GM12878 (cell line): ENCODE measurements at regions of chr2 and their contacts with region 1.

Region 1: DNA sequence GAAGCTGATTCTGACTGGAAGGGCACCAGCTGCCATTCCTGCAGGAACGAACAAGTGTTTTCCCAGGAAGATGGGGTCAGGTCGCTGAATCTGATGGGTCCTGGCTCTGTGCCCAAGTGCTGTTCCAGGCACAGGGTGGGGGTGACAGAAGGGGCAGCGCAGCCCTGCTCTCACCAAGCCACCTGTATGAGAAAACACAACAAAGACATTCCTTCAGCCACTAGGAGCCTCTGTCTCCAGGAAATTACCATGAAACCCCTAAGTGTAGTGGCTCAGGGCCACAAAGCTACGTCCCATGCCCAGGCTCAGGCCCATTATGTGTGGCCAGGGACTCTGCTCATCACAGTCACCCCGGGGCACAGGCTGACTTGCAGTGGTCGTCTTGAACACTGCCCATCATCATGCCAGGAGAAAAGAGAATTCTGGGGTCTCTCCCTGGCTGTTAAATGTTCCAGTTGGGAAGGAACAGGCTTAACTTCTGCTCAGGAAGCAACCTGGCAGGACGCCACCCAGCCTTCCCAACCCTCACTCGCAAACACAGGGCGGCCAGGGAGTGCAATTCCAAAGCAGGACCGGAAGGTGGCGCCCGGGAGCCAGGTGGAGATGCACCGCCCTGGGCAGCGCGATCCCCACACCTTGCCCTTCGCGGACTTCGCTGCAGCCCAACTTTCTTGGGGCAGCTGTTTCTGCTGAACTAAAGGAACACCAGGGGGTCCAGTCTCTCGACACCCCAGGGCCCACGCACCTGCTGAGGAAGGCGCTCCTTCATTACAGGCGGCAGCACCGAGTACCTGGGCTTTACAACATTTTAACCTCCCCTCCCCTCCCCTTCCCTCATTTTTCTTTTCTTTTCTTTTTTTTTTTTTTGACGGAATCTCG is 11.0 kb upstream of the SFTPB start:
- DNase-seq: no peak
- ATAC-seq: peak; percentile 99
- H3K4me3 ChIP-seq: no peak overlapping the region
- H3K27ac ChIP-seq: no peak overlapping the region
- H3K4me1 ChIP-seq: no peaks in the 10 kb centered on the region
- H3K27me3 ChIP-seq: no peaks in the 10 kb centered on the region
- CTCF ChIP-seq: peak; percentile 96 to 99 (median 99)
- EP300 ChIP-seq: no peak
- POLR2A ChIP-seq: no peak
- RAD21 ChIP-seq: peak; percentile 89

Region 2: DNA sequence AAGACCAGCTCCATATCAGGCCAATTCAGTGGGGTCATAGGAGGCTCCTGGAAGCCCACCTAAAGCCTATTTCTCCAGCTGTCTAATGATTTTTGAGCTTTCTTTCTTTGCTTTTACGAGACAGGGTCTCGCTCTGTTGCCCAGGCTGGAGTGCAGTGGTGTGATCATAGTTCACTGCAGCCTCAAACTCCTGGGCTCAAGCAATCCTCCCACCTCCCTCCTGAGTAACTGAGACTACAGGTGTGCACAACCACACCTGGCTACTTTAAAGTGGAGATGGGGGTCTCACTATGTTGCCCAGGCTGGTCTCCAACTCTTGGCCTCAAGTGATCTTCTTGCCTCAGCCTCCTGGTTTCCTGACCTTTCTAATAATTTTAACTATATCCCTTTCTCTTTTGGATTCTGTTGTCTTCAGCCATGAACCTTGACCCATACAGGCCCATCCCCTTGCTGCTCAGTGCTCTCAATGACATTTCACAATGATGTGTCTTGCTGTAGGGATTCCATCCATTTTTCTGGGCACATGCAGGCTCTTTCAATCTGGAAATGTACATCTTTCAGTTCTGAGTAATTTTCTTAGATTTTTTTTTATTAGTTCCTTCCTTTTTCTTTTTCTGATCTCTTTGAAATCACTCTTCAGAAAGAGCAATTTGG is 44.8 kb after region 1 on chr2:
- CTCF ChIA-PET with region 1: interaction called, 14 read pairs
- POLR2A ChIA-PET with region 1: no interaction called
- RAD21 ChIA-PET with region 1: interaction called, 6 read pairs
- SMC1A ChIA-PET with region 1: interaction called, 8 read pairs
- in situ Hi-C with region 1: no loop called
- intact Hi-C with region 1: loop called (anchors 5 kb)
- DNase-seq: no peak
- ATAC-seq: no peak
- H3K4me3 ChIP-seq: no peak overlapping the region
- H3K27ac ChIP-seq: no peak overlapping the region
- H3K4me1 ChIP-seq: no peaks in the 10 kb centered on the region
- H3K27me3 ChIP-seq: peaks cover 0 to 2% of the 10 kb centered on the region in 2 experiments; a peak in 1 of 4 replicates
- CTCF ChIP-seq: no peak
- EP300 ChIP-seq: no peak
- POLR2A ChIP-seq: no peak
- RAD21 ChIP-seq: no peak

Region 3: GRCh38 chr2:85911814-85912692 is 233.0 kb after region 1 on chr2:
- CTCF ChIA-PET with region 1: no interaction called
- POLR2A ChIA-PET with region 1: no interaction called
- RAD21 ChIA-PET with region 1: no interaction called
- SMC1A ChIA-PET with region 1: no interaction called
- in situ Hi-C with region 1: no loop called
- intact Hi-C with region 1: no loop called
- DNase-seq: no peak
- ATAC-seq: peak; percentile 45
- H3K4me3 ChIP-seq: no peak overlapping the region
- H3K27ac ChIP-seq: no peak overlapping the region
- H3K4me1 ChIP-seq: no peaks in the 10 kb centered on the region
- H3K27me3 ChIP-seq: no peaks in the 10 kb centered on the region
- CTCF ChIP-seq: no peak
- EP300 ChIP-seq: no peak
- POLR2A ChIP-seq: no peak
- RAD21 ChIP-seq: no peak